HepG2 (cell line): ENCODE measurements at regions of chrX and their contacts with region 1.

Region 1: DNA sequence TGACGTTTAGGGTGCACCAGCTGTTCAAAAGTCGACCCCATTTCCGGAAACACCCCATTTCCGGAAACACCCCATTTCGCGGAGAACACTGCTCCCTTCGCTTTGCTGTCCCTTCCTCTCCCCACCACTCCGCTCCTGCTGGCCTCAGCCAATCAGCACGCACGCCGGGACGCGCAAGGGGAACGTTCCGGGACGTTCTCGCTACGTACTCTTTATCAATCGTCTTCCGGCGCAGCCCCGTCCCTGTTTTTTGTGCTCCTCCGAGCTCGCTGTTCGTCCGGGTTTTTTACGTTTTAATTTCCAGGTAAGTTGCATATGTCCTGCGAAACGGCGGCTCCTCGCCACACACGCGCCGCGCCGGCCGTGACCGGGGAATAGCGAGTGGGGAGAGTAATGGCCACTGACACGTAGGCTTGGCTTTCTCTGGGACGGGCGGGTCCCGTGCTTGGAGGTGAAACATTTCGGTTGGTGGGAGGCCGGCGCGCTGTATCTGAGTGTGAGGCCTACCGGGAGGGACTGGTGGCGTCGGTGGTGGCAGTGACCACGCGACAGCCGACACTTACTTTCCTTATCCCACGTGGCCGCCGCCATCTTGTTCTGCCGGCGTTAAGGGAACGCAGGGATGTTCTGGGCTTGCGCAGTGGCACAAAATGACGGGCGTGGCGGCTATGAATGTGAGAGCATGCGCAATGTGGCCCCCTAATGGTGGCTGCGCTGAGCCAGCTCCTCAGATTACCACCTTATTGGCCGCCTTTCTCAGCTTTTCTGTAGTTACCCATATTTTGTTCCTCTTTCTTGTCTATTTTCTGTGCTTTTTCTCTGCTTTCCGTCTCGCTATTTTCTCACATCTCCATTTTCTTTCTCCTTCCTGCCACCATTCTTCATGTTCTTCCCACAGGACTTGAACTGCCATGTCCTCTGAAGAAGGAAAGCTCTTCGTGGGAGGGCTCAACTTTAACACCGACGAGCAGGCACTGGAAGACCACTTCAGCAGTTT is at the start of gene RBM3:
- DNase-seq: peak; percentile 82
- ATAC-seq: peak; percentile 97
- H3K4me3 ChIP-seq: peak within 1 kb of the TSS; percentile 73 to 79 (median 74)
- H3K27ac ChIP-seq: peak within 1 kb of the TSS; percentile 97
- H3K4me1 ChIP-seq: peaks cover 24% of the 10 kb centered on the region
- H3K27me3 ChIP-seq: no peaks in the 10 kb centered on the region; a peak in 1 of 5 replicates
- CTCF ChIP-seq: peak; percentile 56
- EP300 ChIP-seq: 0 out of 4 replicates have a peak, but pooled peaks of 1 of the 2 experiments have one; percentile 6
- POLR2A ChIP-seq: peak; percentile 62 to 91
- RAD21 ChIP-seq: no peak
- total RNA-seq, gene RBM3: 182 and 239 TPM in 2 replicates

Region 2: GRCh38 chrX:48521353-48522243 is 53.0 kb before region 1 on chrX and contains the start of gene EBP:
- CTCF ChIA-PET with region 1: no interaction called
- POLR2A ChIA-PET with region 1: interaction called, 10 read pairs
- in situ Hi-C with region 1: no loop called
- intact Hi-C with region 1: no loop called
- DNase-seq: peak; percentile 84
- ATAC-seq: peak; percentile 98
- H3K4me3 ChIP-seq: peak within 1 kb of the TSS; percentile 54 to 77 (median 59)
- H3K27ac ChIP-seq: peak within 1 kb of the TSS; percentile 90
- H3K4me1 ChIP-seq: peaks cover 30% of the 10 kb centered on the region
- H3K27me3 ChIP-seq: no peaks in the 10 kb centered on the region
- CTCF ChIP-seq: no peak
- EP300 ChIP-seq: no peak
- POLR2A ChIP-seq: peak; percentile 72 to 91
- RAD21 ChIP-seq: no peak
- total RNA-seq, gene EBP: 162 and 260 TPM in 2 replicates

Region 3: DNA sequence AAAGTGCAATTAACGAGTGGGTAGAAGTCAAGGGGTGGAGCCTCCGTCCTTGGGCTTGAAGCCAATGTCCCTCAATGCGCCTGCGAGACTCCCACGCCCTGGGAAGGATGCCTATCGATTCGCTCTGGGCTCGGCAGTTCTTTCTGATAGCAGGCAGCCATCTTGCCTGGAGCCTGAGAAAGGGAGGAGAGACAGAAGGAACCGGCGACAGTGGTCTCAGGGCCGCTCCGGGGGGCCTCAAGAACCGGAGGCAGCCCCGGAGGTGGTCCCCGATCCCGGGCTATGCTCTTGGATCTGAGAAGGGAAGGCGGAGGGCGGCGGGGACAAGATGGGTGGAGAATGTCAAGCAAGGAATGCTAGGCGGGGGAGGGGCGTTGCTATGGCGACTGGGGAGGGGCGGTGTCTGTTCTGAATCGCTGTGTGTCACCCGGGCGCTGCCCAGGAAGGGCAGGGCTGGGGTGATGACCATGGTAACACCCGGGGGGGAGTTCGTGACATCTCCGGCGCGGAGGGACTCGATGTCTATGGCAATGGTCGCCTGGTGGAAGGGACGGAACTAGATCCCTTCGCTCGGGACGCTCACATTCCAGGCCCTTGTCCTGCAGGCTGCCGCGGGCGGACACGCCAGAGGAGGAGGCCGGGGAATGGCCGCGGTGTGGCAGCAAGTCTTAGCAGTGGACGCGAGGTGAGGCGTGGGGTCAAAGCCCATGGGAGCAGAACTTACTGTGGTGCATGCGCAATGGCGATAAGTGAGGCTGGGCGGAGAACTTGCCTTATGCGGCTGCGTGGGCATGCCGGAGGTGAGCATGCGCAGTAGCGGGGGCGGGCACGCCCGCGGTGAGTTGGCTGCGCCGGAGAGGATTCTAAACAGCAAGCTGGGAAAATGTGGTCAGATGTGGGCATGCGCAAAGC is 23.0 kb after region 1 on chrX and contains the start of gene WDR13:
- CTCF ChIA-PET with region 1: no interaction called
- POLR2A ChIA-PET with region 1: interaction called, 15 read pairs
- in situ Hi-C with region 1: no loop called
- intact Hi-C with region 1: no loop called
- DNase-seq: peak; percentile 84
- ATAC-seq: peak; percentile 89
- H3K4me3 ChIP-seq: peak within 1 kb of the TSS; percentile 73 to 81 (median 74); a peak in 5 of 6 replicates
- H3K27ac ChIP-seq: peak within 1 kb of the TSS; percentile 98
- H3K4me1 ChIP-seq: peaks cover 17% of the 10 kb centered on the region
- H3K27me3 ChIP-seq: no peaks in the 10 kb centered on the region
- CTCF ChIP-seq: peak; percentile 42; the same call in 1 of the 2 replicates
- EP300 ChIP-seq: no peak
- POLR2A ChIP-seq: peak; percentile 73 to 88
- RAD21 ChIP-seq: no peak
- total RNA-seq, gene WDR13: 19.3 and 28.7 TPM in 2 replicates

Region 4: GRCh38 chrX:49002091-49002935 is 427.7 kb after region 1 on chrX and contains the start of gene GRIPAP1:
- CTCF ChIA-PET with region 1: no interaction called
- POLR2A ChIA-PET with region 1: no interaction called
- in situ Hi-C with region 1: no loop called
- intact Hi-C with region 1: no loop called
- DNase-seq: peak; percentile 73
- ATAC-seq: peak; percentile 85
- H3K4me3 ChIP-seq: peak within 1 kb of the TSS; percentile 64 to 86 (median 75)
- H3K27ac ChIP-seq: peak within 1 kb of the TSS; percentile 99
- H3K4me1 ChIP-seq: peaks cover 18% of the 10 kb centered on the region
- H3K27me3 ChIP-seq: no peaks in the 10 kb centered on the region
- CTCF ChIP-seq: no peak
- EP300 ChIP-seq: no peak
- POLR2A ChIP-seq: peak in 1 of 2 experiments; percentile 73; a peak in 3 of 4 replicates
- RAD21 ChIP-seq: no peak
- total RNA-seq, gene GRIPAP1: 15.0 and 16.1 TPM in 2 replicates